Dorsolateral prefrontal cortex (tissue), 120 donors: ENCODE measurements at regions of chr10 and their contacts with region 1.

Region 1: GRCh38 chr10:69318106-69318866 is 40.0 kb downstream of the HK1 start:
- DNase-seq: peak; percentile 55 to 93 (median 84)
- H3K4me3 ChIP-seq: peak overlapping the region; percentile 71 to 99 (median 93)
- H3K27ac ChIP-seq: peak overlapping the region in 58 of 59 donors; percentile 4 to 96 (median 88)
- H3K27me3 ChIP-seq: no peaks in the 10 kb centered on the region
- CTCF ChIP-seq: peak in 14 of 56 donors; percentile 8 to 37 (median 18)

Region 2: DNA sequence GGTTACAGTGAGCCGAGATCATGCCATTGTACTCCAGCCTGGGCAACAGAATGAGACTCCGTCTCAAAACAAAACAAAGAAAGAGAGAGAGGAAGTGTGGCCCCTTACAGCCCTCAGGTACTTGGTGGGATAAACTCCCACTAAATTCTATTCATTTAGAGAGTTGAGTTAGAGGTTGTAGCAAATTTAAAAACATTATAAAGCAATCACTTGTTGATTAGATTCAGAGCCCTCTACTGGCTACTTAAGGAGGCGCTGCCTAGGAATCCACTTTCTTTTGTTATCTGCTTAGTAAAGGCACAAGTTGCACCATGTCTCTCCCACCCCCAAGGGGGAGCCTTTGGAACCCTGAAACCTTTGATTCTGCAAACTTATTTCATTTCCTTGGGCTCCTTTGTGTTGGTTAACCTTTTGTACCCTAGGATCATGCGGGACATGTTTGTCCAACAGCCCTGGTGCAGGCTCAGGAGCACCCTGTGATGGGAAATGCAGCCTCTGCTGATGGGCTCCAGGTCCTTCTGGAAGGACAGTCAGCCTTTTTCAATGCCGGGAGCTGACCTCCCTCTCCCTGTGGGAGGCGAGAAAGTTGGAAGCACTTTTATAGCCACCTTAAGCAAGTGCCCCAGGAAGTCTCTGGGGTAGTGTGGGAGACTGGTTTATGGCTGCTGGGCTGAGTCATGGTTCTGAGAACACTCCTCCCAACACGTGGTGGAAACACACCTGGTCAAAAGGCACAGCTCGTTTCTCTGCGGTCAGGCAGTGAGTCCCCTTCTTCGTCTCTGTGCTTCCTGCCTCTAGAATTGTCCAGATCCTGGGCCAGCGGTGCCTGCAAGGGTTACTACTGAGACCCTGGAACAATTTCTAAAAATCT is 95.9 kb before region 1 on chr10:
- intact Hi-C with region 1: no loop called
- DNase-seq: peak in 1 of 10 donors; percentile 32
- H3K4me3 ChIP-seq: no peak overlapping the region
- H3K27ac ChIP-seq: no peak overlapping the region
- H3K27me3 ChIP-seq: peaks cover 0 to 27% (median 3%) of the 10 kb centered on the region in 45 donors
- CTCF ChIP-seq: peak; percentile 36 to 69 (median 57)

Region 3: GRCh38 chr10:69242852-69243212 is 75.5 kb before region 1 on chr10:
- intact Hi-C with region 1: loop called in 1 of 2 experiments (anchors 2 kb)
- DNase-seq: peak; percentile 23 to 85 (median 79)
- H3K4me3 ChIP-seq: peak overlapping the region in 18 of 59 donors; percentile 1 to 40 (median 12)
- H3K27ac ChIP-seq: peak overlapping the region in 7 of 59 donors; percentile 3 to 44 (median 13)
- H3K27me3 ChIP-seq: peaks cover 0 to 24% (median 0%) of the 10 kb centered on the region in 45 donors
- CTCF ChIP-seq: peak in 11 of 56 donors; percentile 7 to 51 (median 28)

Region 4: DNA sequence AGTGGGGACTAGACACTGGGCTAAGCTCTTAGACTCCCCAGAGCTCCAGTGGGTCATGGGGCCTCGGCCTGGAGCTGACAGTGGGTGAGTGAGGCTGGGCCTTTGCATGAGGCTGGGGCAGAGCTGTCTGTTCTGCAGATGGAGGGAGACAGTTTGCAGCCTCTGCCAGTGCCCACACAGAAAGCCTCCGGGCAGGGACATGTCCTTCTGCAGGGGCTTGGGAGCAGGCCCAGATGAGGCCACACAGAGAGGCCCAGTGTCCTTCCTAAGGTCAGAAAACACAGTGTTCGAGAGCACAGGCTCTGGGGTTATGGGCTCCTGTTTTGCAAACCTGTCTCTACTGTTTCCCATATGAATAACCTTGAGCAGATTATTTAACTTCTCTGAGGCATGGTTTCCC is 65.1 kb before region 1 on chr10:
- intact Hi-C with region 1: no loop called
- DNase-seq: no peak
- H3K4me3 ChIP-seq: no peak overlapping the region
- H3K27ac ChIP-seq: no peak overlapping the region
- H3K27me3 ChIP-seq: peaks cover 0 to 54% (median 0%) of the 10 kb centered on the region in 45 donors
- CTCF ChIP-seq: no peak

Region 5: DNA sequence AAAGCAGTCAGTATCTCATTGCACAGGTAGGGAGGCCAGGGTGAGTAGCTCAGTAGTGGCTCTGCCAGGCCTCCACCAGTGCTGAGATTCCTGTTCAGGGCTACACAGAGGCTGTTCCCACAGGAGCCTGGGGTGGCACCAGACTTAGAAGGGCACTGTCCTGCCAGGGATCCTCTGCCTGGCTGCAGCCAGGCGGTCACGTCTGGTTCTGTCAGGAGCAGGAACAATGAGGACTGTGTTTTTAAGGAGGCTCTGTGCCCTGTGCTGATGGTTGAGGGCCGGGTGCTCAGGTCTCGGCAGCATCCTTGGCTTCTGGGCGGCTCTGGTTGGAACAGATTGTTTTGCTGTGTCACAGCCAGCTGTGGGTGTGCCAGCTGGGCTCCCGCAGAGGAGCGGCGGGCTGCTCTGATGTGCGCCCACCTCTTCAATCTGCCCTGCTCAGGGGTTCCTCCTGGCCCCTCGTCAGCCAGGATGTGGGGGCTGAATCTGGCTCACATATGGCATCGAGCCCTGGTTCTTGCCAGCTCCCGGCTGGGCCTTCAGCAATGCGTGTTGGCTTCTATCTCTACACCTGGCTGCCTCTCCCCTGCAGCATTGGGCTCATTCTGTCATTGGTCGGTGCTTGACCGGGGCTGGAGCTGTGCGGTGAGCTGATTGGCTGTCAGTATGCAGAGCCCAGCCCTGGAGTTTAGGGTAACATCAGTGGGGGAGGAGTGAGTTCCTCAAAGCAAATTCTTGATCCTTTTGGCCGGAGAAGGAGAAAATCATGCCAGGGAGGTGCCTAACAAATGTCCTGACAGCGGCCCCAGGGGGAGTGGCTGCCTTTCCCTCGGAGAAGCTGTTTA is 57.2 kb after region 1 on chr10:
- intact Hi-C with region 1: loop called (anchors 2 to 5 kb)
- DNase-seq: peak; percentile 43 to 95 (median 78)
- H3K4me3 ChIP-seq: peak overlapping the region in 11 of 59 donors; percentile 4 to 26 (median 12)
- H3K27ac ChIP-seq: peak overlapping the region in 56 of 59 donors; percentile 1 to 86 (median 67)
- H3K27me3 ChIP-seq: peaks cover 0 to 9% (median 0%) of the 10 kb centered on the region in 45 donors
- CTCF ChIP-seq: no peak